Endothelial cell of umbilical vein (primary cell): ENCODE measurements at regions of chr17 and their contacts with region 1.

Region 1: DNA sequence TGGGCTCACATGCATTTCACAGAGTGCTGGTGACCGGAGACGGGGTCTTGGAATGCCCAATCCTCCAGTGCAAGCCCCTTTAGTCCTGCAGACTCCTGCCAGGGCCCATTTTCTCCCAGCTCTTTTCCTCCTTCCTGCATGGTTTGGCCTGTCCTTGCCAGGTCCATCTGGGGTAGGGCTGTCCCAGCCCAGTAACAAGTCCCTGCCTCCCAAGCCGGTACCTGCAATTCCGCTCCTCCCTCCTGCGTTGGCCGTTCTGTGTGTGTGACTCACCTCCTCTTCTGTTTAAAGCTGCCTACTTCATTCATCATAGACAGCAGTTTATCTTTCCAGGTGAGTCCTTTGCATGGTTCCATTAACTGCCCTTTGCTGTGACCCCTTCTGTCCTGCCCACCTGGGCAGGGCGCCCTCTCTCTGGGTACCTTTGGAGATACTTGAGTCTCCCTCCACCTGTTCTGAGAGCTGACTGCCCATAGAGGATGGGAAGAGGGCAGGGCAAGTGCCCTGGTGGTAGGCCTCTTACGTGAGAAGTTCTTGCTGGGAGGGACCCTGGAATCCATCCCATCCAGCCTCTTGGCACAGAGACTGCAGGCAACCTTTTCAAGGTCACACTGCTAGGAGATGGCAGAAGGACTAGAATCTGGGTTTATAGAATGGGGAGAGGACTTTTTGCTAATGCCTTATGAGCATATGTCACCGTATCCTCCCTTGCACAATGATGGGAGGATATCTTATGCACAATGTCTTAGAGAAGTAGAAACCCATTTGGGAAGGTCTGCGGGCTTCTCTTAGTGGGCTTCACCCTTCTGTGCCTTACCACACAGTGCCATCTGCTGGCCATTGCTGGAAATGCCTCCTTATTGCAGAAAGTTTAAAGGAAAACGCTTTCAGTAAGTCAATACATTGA is 29.7 kb upstream of the LGALS9 start:
- DNase-seq: peak; percentile 87
- H3K4me3 ChIP-seq: no peak overlapping the region
- H3K27ac ChIP-seq: no peak overlapping the region
- H3K4me1 ChIP-seq: peaks cover 14% of the 10 kb centered on the region
- H3K27me3 ChIP-seq: no peaks in the 10 kb centered on the region
- CTCF ChIP-seq: peak; percentile 82 to 92
- POLR2A ChIP-seq: no peak

Region 2: GRCh38 chr17:27236717-27237315 is 364.5 kb before region 1 on chr17:
- CTCF ChIA-PET with region 1: interaction called, 121 read pairs
- POLR2A ChIA-PET with region 1: interaction called, 3 read pairs
- dilution Hi-C with region 1: no loop called
- intact Hi-C with region 1: loop called (anchors 1 kb)
- DNase-seq: peak; percentile 86
- H3K4me3 ChIP-seq: no peak overlapping the region
- H3K27ac ChIP-seq: no peak overlapping the region
- H3K4me1 ChIP-seq: no peaks in the 10 kb centered on the region
- H3K27me3 ChIP-seq: no peaks in the 10 kb centered on the region
- CTCF ChIP-seq: peak; percentile 71 to 73
- POLR2A ChIP-seq: no peak

Region 3: GRCh38 chr17:27315322-27315721 is 286.0 kb before region 1 on chr17:
- CTCF ChIA-PET with region 1: interaction called, 12 read pairs
- POLR2A ChIA-PET with region 1: no interaction called
- dilution Hi-C with region 1: no loop called
- intact Hi-C with region 1: no loop called
- DNase-seq: no peak
- H3K4me3 ChIP-seq: no peak overlapping the region
- H3K27ac ChIP-seq: no peak overlapping the region
- H3K4me1 ChIP-seq: no peaks in the 10 kb centered on the region
- H3K27me3 ChIP-seq: no peaks in the 10 kb centered on the region
- CTCF ChIP-seq: no peak
- POLR2A ChIP-seq: no peak

Region 4: DNA sequence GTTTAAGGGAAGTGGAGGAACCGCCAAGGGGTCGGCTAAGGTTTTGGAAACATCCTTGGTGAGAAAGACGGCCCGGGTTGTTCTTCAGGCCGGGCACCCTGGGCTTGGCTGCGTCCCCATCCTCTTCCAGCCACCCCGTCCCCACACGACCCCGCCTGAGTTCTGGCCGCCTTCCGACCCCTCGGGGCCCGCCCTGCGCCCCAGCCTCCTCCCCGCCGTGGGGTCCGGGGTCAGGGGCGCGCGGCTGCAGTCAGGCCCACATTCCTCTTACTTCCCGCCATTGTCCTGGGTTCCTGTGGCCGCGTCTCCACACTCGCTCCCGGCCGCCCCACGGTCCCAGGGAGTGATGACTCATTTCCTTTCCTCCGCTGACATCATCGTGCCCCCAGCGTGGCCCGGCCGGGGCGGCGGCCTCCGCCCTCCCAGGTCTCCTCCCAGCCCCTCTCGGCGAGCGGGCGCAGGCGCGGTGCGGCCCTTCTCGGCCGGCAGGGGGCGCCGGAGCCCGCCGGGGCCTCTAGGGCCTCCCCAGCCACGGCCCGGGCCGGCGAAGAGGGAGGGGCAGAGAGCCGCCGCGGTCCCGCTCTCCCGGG is 247.8 kb before region 1 on chr17:
- CTCF ChIA-PET with region 1: interaction called, 73 read pairs
- POLR2A ChIA-PET with region 1: no interaction called
- dilution Hi-C with region 1: no loop called
- intact Hi-C with region 1: loop called (anchors 1 kb)
- DNase-seq: peak; percentile 97
- H3K4me3 ChIP-seq: peak overlapping the region in 1 of 3 experiments; percentile 20
- H3K27ac ChIP-seq: peak overlapping the region; percentile 99
- H3K4me1 ChIP-seq: peaks cover 40% of the 10 kb centered on the region
- H3K27me3 ChIP-seq: no peaks in the 10 kb centered on the region
- CTCF ChIP-seq: peak; percentile 61 to 99
- POLR2A ChIP-seq: peak; percentile 47

Region 5: DNA sequence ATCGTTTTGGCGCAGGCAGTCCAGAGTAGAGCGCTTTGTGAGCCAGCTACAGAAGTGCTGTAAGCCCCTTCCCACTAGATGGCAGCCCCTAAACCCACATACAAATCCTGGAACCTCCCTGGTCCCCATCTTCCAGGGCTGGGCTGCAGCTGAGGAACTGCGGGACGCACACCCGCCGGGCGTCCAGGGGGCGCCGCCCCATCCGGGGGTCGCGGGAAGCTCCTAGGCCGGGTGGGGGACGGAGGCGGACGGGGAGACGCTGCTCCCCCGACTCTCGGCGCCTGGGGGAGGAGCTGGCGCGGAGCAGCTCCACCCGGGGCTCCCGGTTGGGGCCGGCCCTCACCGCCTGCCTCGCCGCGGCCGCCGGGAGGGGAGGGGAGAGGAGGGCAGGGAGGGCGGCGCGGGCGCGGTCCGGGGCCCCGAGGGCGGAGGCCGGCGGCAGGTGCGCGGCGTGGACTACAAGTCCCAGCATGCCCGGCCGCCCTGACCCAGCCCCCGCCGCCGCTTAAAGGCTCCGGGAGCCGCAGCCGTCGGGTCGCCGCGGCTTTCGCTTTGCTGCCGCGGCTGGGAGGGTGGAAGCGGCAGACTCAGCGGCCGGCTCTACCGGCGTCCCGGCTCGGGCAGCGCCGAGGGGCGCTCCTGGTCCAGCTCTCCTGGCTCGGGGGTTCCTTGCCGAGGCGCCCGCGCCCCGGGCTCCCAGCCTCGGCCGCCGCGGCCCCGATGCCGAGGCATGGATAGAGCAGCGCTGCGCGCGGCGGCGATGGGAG is 145.2 kb before region 1 on chr17 and contains the start of gene KSR1:
- CTCF ChIA-PET with region 1: interaction called, 79 read pairs
- POLR2A ChIA-PET with region 1: interaction called, 4 read pairs
- dilution Hi-C with region 1: no loop called
- intact Hi-C with region 1: loop called (anchors 2 kb)
- DNase-seq: peak; percentile 78
- H3K4me3 ChIP-seq: peak within 1 kb of the TSS; percentile 24 to 85 (median 62)
- H3K27ac ChIP-seq: peak within 1 kb of the TSS; percentile 35
- H3K4me1 ChIP-seq: peaks cover 18% of the 10 kb centered on the region
- H3K27me3 ChIP-seq: no peaks in the 10 kb centered on the region
- CTCF ChIP-seq: peak; percentile 39 to 74
- POLR2A ChIP-seq: peak; percentile 71
- total RNA-seq, gene KSR1: 55.6 and 80.2 TPM in 2 replicates

Region 6: DNA sequence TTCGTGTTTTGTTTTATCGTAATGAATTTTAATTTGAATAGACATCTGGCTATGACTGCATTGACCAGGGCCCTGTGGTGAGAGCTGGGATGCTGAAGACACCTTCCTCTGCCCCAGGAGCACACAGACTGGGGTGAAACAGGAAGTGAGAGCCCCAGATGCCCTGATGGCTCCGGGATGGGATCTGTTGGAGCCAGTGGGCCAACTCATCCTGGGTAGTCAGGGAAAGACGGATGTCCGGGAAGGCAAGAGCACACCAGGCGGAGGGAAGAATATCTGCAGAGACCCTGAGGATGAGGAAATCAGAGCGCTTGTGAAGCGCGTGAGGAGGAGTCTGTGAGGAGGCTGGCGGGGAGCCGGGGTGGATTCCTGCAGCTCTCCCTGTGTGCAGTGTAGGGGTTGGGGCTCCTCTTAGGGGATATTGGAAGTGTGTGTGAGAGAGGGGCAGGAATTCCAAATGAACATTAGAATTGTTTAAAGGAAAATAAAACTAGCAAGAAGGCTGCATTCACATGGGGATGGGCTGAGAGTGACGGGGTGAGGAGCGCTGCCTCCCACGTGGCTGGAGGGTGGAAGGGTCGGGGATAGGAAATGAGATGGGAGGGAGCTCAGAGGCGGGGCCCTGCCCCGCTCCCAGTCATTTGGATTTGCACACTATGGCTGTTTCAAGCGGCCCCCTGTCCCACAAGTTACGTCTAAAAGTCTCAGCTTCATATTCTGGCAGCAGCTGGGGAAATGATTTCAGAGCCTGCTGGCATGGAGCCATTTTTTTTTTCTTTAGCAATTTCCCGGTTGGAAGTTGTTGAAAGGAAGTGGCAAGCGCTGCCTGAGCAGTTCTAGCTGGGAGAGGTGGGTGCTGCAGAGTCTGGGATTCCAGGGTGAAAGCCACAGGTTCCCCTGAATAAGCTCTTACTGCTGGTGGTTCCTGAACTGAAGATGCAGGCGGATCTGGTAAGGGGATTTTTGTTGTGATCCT is 41.5 kb before region 1 on chr17:
- CTCF ChIA-PET with region 1: interaction called, 19 read pairs
- POLR2A ChIA-PET with region 1: no interaction called
- dilution Hi-C with region 1: no loop called
- intact Hi-C with region 1: loop called (anchors 1 kb)
- DNase-seq: peak; percentile 96
- H3K4me3 ChIP-seq: peak overlapping the region in 2 of 3 experiments; percentile 3 to 49
- H3K27ac ChIP-seq: peak overlapping the region; percentile 86
- H3K4me1 ChIP-seq: peaks cover 59% of the 10 kb centered on the region
- H3K27me3 ChIP-seq: no peaks in the 10 kb centered on the region
- CTCF ChIP-seq: peak; percentile 12 to 21
- POLR2A ChIP-seq: peak; percentile 68

Region 7: GRCh38 chr17:27621536-27621935 is 20.2 kb after region 1 on chr17:
- CTCF ChIA-PET with region 1: no interaction called
- POLR2A ChIA-PET with region 1: no interaction called
- dilution Hi-C with region 1: no loop called
- intact Hi-C with region 1: no loop called
- DNase-seq: no peak
- H3K4me3 ChIP-seq: no peak overlapping the region
- H3K27ac ChIP-seq: no peak overlapping the region
- H3K4me1 ChIP-seq: peaks cover 13% of the 10 kb centered on the region
- H3K27me3 ChIP-seq: no peaks in the 10 kb centered on the region
- CTCF ChIP-seq: no peak
- POLR2A ChIP-seq: no peak

Region 8: GRCh38 chr17:27654654-27655524 is 53.6 kb after region 1 on chr17:
- CTCF ChIA-PET with region 1: interaction called, 150 read pairs
- POLR2A ChIA-PET with region 1: no interaction called
- dilution Hi-C with region 1: no loop called
- intact Hi-C with region 1: loop called (anchors 1 kb)
- DNase-seq: peak; percentile 66
- H3K4me3 ChIP-seq: no peak overlapping the region
- H3K27ac ChIP-seq: no peak overlapping the region
- H3K4me1 ChIP-seq: no peaks in the 10 kb centered on the region
- H3K27me3 ChIP-seq: no peaks in the 10 kb centered on the region
- CTCF ChIP-seq: peak; percentile 77 to 91
- POLR2A ChIP-seq: no peak